ENCODE measurements at regions of chr1 and their contacts with region 1.

Region 1: DNA sequence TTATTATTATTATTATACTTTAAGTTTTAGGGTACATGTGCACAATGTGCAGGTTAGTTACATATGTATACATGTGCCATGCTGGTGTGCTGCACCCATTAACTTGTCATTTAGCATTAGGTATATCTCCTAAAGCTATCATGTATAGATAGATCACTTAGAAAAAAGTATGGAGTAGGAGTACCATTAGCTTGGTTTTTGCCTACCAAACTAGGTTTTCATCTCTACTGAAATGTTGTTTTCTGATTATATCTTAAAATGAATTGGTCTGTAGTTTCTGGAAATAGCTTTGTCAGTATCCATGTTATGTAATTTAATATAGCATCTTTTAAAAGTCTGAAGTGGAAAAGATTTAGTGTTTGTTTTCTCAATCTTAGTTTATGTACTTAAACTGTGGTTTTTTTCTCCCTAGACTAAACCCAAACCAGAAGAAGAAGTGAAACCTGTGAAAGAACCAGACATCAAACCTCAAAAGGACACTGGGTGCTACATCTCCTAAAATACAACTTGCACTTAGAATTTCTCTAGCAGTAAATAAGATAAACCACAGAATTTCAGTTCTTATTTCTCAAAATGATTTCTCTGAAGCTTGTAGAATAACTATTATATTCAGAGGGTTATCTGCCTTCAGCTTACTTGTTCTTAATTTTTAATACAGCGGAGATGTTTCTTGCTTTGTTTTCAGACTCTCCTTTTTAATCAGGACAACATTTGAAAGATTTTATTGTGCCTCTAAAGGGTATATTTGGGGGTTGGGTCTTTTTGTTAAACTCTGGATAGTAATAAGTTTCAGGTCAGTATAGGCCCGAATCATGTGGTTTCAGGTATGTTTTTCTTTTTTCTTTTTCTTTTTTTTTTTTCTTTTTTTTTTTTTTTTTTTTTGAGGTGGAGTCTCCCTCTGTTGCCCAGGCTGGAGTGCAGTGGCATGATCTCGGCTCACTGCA is 4.5 kb upstream of the FAM177B start:
- DNase-seq: peak; percentile 77
- ATAC-seq: peak; percentile 99
- H3K4me3 ChIP-seq: no peak overlapping the region
- H3K27ac ChIP-seq: peak overlapping the region; percentile 22; the same call in 1 of the 2 replicates
- H3K4me1 ChIP-seq: peaks cover 15% of the 10 kb centered on the region
- H3K27me3 ChIP-seq: no peaks in the 10 kb centered on the region
- CTCF ChIP-seq: no peak
- EP300 ChIP-seq: peak; percentile 74 to 93; a peak in 3 of 4 replicates
- POLR2A ChIP-seq: no peak
- RAD21 ChIP-seq: no peak

Region 2: GRCh38 chr1:222283147-222283768 is 449.2 kb before region 1 on chr1:
- CTCF ChIA-PET with region 1: no interaction called
- POLR2A ChIA-PET with region 1: no interaction called
- RAD21 ChIA-PET with region 1: no interaction called
- SMC1A ChIA-PET with region 1: no interaction called
- in situ Hi-C with region 1: no loop called
- intact Hi-C with region 1: no loop called
- DNase-seq: no peak
- ATAC-seq: no peak
- H3K4me3 ChIP-seq: no peak overlapping the region
- H3K27ac ChIP-seq: no peak overlapping the region
- H3K4me1 ChIP-seq: no peaks in the 10 kb centered on the region
- H3K27me3 ChIP-seq: no peaks in the 10 kb centered on the region; a peak in 1 of 4 replicates
- CTCF ChIP-seq: no peak
- EP300 ChIP-seq: no peak
- POLR2A ChIP-seq: no peak
- RAD21 ChIP-seq: no peak

Region 3: GRCh38 chr1:222654849-222655248 is 77.6 kb before region 1 on chr1:
- CTCF ChIA-PET with region 1: interaction called, 4 read pairs
- POLR2A ChIA-PET with region 1: no interaction called
- RAD21 ChIA-PET with region 1: interaction called, 3 read pairs
- SMC1A ChIA-PET with region 1: interaction called, 7 read pairs
- in situ Hi-C with region 1: no loop called
- intact Hi-C with region 1: loop called (anchors 2 kb)
- DNase-seq: peak; percentile 72
- ATAC-seq: peak; percentile 98
- H3K4me3 ChIP-seq: no peak overlapping the region
- H3K27ac ChIP-seq: no peak overlapping the region
- H3K4me1 ChIP-seq: peaks cover 30% of the 10 kb centered on the region
- H3K27me3 ChIP-seq: no peaks in the 10 kb centered on the region
- CTCF ChIP-seq: peak; percentile 24 to 38 (median 36); a peak in 5 of 6 replicates
- EP300 ChIP-seq: peak; percentile 42 to 56; a peak in 2 of 4 replicates
- POLR2A ChIP-seq: no peak
- RAD21 ChIP-seq: peak; percentile 49

Region 4: GRCh38 chr1:222713091-222713961 is 19.2 kb before region 1 on chr1:
- CTCF ChIA-PET with region 1: interaction called, 8 read pairs
- POLR2A ChIA-PET with region 1: interaction called, 11 read pairs
- RAD21 ChIA-PET with region 1: interaction called, 12 read pairs
- SMC1A ChIA-PET with region 1: interaction called, 14 read pairs
- in situ Hi-C with region 1: no loop called
- intact Hi-C with region 1: loop called (anchors 2 kb)
- DNase-seq: peak; percentile 88
- ATAC-seq: peak; percentile 86
- H3K4me3 ChIP-seq: peak overlapping the region; percentile 81
- H3K27ac ChIP-seq: peak overlapping the region; percentile 98
- H3K4me1 ChIP-seq: no peaks in the 10 kb centered on the region
- H3K27me3 ChIP-seq: no peaks in the 10 kb centered on the region
- CTCF ChIP-seq: no peak
- EP300 ChIP-seq: peak in 1 of 2 experiments; percentile 31; a peak in 1 of 4 replicates
- POLR2A ChIP-seq: peak; percentile 70
- RAD21 ChIP-seq: peak; percentile 16; the same call in 1 of the 2 replicates

Region 5: GRCh38 chr1:222750651-222751050 is 18.2 kb after region 1 on chr1:
- CTCF ChIA-PET with region 1: interaction called, 9 read pairs
- POLR2A ChIA-PET with region 1: no interaction called
- RAD21 ChIA-PET with region 1: interaction called, 4 read pairs
- SMC1A ChIA-PET with region 1: interaction called, 14 read pairs
- in situ Hi-C with region 1: no loop called
- intact Hi-C with region 1: no loop called
- DNase-seq: no peak
- ATAC-seq: peak; percentile 85
- H3K4me3 ChIP-seq: no peak overlapping the region
- H3K27ac ChIP-seq: no peak overlapping the region
- H3K4me1 ChIP-seq: peaks cover 6% of the 10 kb centered on the region
- H3K27me3 ChIP-seq: no peaks in the 10 kb centered on the region
- CTCF ChIP-seq: no peak
- EP300 ChIP-seq: no peak
- POLR2A ChIP-seq: no peak
- RAD21 ChIP-seq: no peak

Region 6: GRCh38 chr1:222772996-222773379 is 40.5 kb after region 1 on chr1:
- CTCF ChIA-PET with region 1: interaction called, 3 read pairs
- POLR2A ChIA-PET with region 1: no interaction called
- RAD21 ChIA-PET with region 1: interaction called, 5 read pairs
- SMC1A ChIA-PET with region 1: interaction called, 10 read pairs
- in situ Hi-C with region 1: no loop called
- intact Hi-C with region 1: no loop called
- DNase-seq: peak; percentile 73
- ATAC-seq: peak; percentile 87
- H3K4me3 ChIP-seq: 0 out of 2 replicates have a peak overlapping the region, but pooled peaks have one; percentile 17
- H3K27ac ChIP-seq: 0 out of 2 replicates have a peak overlapping the region, but pooled peaks have one; percentile 25
- H3K4me1 ChIP-seq: peaks cover 14% of the 10 kb centered on the region
- H3K27me3 ChIP-seq: no peaks in the 10 kb centered on the region
- CTCF ChIP-seq: no peak
- EP300 ChIP-seq: 0 out of 4 replicates have a peak, but pooled peaks of 1 of the 2 experiments have one; percentile 15
- POLR2A ChIP-seq: no peak
- RAD21 ChIP-seq: no peak

Region 7: DNA sequence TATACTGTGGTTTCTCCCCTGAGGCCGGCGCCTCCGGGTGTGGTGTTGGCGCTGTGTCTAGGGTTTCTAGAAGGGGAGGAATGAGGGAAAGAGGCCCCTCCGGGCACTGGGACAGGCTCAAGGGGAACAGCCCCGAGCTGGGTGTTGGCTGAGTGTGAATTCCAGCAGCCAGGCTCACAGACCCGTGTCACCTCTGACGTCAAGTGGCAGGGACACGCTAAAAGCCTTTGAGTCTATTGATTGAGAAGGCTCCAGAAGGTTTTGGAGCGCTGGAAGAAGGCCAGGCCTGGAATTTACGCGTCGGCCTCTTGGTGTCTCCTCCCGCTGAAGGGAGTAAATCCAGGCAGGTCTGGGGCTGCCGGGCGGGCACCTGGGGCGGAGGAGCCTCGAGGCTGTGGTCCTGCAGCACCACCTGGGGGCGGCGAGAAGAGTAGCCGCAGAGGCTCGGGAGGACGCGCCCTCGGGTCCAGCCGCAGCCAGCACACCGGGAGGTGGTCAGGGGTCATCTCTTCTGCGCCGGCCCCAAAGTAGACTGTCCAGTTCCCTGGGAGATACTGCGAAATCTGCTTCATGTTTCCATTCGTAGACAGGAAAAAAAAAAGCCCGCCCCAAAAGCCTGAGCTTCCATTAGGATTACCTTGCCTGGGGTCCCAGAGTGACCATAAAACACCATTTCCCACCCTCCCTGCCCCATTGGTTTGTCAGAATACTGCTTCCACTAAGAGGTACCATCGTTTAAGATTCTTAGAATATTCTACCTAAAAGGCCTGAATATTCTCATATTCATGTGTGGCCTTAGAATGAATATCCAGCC is 348.9 kb after region 1 on chr1:
- CTCF ChIA-PET with region 1: no interaction called
- POLR2A ChIA-PET with region 1: no interaction called
- RAD21 ChIA-PET with region 1: no interaction called
- SMC1A ChIA-PET with region 1: interaction called, 4 read pairs
- in situ Hi-C with region 1: loop called (anchors 10 kb)
- intact Hi-C with region 1: no loop called
- DNase-seq: peak; percentile 11
- ATAC-seq: peak; percentile 99
- H3K4me3 ChIP-seq: peak overlapping the region; percentile 16; the same call in 1 of the 2 replicates
- H3K27ac ChIP-seq: no peak overlapping the region
- H3K4me1 ChIP-seq: no peaks in the 10 kb centered on the region
- H3K27me3 ChIP-seq: no peaks in the 10 kb centered on the region; a peak in 1 of 4 replicates
- CTCF ChIP-seq: peak; percentile 76 to 94 (median 93); a peak in 5 of 6 replicates
- EP300 ChIP-seq: no peak
- POLR2A ChIP-seq: no peak
- RAD21 ChIP-seq: peak; percentile 85

Region 8: DNA sequence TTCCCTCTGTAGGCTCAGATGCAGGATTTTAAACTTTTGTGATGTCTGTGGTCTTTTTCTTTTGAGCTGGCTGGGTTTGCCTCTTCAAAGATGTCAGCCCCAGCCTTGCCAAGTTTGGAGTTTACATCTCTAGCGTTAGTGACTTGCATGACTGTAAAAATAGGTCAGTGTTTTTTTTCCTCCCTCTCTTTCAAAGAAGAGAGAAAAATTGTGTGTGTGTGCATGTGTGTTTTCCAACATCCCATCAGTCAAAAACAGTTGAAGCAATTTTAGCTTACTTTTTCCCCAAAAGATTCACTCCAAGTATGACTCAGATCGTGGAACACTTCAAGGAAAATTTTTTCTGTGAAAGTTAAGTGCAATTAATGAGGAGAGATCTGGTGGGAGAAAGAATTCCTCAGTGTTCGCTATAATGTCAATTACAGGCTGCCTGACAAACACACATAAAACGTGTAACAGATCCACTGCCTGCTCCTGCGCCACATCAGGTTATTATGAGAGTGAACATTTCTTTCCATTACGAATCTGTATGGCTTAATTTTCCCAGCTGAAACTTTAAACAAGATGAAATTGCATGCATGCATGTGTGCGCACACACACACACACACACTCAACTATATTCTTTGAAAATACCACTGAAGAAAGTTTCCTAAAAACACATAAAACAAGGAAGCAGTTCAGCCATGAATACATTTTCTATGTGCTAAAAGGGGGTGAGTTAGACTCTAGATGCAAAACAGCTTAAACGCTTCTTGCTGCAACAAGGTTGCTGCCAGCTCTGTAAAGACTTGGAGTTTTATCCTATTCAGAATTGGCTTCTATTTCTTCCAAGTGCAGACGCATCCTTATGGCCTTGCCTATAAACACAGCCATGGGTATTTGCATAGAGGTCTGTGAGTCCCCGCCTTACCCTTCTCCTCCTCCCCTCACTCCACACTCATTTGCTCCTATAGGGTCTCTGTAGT is 355.1 kb after region 1 on chr1:
- CTCF ChIA-PET with region 1: interaction called, 13 read pairs
- POLR2A ChIA-PET with region 1: no interaction called
- RAD21 ChIA-PET with region 1: no interaction called
- SMC1A ChIA-PET with region 1: interaction called, 11 read pairs
- in situ Hi-C with region 1: loop called (anchors 10 kb)
- intact Hi-C with region 1: no loop called
- DNase-seq: no peak
- ATAC-seq: no peak
- H3K4me3 ChIP-seq: no peak overlapping the region
- H3K27ac ChIP-seq: no peak overlapping the region
- H3K4me1 ChIP-seq: no peaks in the 10 kb centered on the region
- H3K27me3 ChIP-seq: no peaks in the 10 kb centered on the region; a peak in 2 of 4 replicates
- CTCF ChIP-seq: no peak
- EP300 ChIP-seq: no peak
- POLR2A ChIP-seq: no peak
- RAD21 ChIP-seq: no peak

Measured in GM12878 (cell line).